ENCODE measurements at regions of chr15 and their contacts with region 1.

Region 1: GRCh38 chr15:83011271-83012075 is at the start of gene C15orf40:
- DNase-seq: peak; percentile 89
- H3K4me3 Mint-ChIP-seq: peak within 1 kb of the TSS; percentile 82
- H3K27ac Mint-ChIP-seq: peak within 1 kb of the TSS; percentile 82
- H3K4me1 Mint-ChIP-seq: peaks cover 24% of the 10 kb centered on the region
- H3K27me3 Mint-ChIP-seq: no peaks in the 10 kb centered on the region
- CTCF ChIP-seq: peak; percentile 37
- total RNA-seq, gene C15orf40: 38.1 and 39.3 TPM in 2 replicates

Region 2: GRCh38 chr15:82540055-82540983 is 471.2 kb before region 1 on chr15 and contains the start of gene RPS17:
- CTCF ChIA-PET with region 1: interaction called, 3 read pairs
- POLR2A ChIA-PET with region 1: interaction called, 11 read pairs
- intact Hi-C with region 1: no loop called
- DNase-seq: peak; percentile 95
- H3K4me3 Mint-ChIP-seq: peak within 1 kb of the TSS; percentile 92
- H3K27ac Mint-ChIP-seq: peak within 1 kb of the TSS; percentile 81
- H3K4me1 Mint-ChIP-seq: peaks cover 30% of the 10 kb centered on the region
- H3K27me3 Mint-ChIP-seq: no peaks in the 10 kb centered on the region
- CTCF ChIP-seq: peak; percentile 99
- total RNA-seq, gene RPS17: 2,707 and 3,065 TPM in 2 replicates

Region 3: DNA sequence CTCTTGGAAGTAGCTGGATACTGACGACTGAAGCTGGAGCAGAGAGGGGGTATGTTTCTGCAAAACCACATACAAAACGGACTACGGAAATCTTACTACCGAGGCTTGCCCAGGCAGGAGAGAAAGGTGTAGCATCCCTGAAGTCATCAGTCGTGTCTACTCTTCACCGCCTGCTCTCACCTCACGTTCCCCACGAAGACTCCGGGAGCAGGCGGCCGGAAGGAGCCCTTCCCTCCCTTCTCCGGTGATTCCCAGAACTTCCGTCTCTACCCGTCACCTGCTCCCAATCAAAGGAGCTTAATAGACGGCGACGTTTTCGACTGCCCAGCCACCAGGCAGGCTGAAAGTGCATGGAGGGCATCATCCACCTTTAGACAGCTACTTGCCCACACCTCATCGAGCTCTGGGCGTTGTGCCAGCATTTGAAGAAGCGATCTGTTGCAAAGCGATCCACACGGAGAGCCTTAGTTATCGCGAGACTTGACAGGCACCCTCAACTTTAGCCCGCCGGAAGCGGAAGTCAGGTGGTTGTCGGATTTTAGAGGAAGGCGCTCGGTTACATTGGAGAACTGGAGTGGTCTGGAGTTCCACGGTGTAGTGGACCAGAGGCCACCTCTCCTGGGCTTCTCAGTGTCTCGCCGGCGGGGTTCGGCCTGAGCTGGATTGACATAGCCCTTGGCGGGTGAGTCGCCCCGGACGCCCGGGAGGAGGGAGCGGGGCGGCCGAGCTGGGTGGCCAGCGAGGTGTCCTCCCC is 25.6 kb before region 1 on chr15 and contains the start of gene RAMAC:
- CTCF ChIA-PET with region 1: interaction called, 21 read pairs
- POLR2A ChIA-PET with region 1: interaction called, 26 read pairs
- intact Hi-C with region 1: no loop called
- DNase-seq: peak; percentile 96
- H3K4me3 Mint-ChIP-seq: peak within 1 kb of the TSS; percentile 98
- H3K27ac Mint-ChIP-seq: peak within 1 kb of the TSS; percentile 72
- H3K4me1 Mint-ChIP-seq: peaks cover 4% of the 10 kb centered on the region
- H3K27me3 Mint-ChIP-seq: no peaks in the 10 kb centered on the region
- CTCF ChIP-seq: no peak
- total RNA-seq, gene RAMAC: 21.0 and 25.6 TPM in 2 replicates

Region 4: DNA sequence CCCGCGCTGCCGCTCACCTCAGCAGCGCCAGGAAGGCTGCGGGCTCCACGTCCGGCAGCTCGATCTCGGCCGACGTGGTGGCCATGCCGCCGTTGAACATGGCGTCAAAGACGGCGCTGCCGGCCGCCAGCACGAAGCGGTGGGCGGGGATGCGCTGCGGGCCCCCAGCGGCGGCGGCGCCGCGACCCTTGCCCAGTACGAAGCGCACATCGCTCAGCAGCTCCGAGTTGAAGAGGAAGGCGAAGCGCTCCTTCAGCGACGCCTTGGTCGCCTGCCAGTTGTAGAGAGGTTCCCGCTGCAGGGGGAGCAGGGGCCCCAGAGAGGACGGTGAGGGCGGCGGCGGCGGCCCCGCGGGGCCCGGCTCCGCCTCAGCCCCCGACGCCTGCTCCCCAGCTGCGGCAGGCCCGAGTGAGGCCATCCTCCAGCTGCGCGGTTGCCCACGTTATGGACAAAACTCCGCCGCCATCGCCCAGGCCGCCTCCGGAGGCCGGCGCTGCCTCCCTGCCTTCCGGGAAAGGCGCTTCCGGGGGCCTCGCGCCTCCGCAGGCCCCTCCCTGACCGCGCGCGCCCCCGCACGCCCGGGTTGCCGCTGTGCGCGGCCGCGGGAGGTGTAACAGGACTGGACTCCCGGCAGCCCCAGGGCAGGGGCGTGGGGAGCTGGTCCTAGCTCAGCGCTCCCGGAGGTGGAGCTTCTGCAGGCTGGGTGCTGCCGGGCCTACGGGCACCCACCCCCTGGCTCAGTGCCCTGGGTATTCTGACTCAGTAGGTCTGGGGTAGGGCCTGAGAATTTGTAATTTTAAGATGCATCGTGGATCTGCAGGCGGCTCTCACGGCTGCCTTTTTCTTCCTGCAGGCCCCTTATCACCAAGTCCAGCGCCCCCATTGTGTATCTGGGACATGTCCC is 55.5 kb after region 1 on chr15 and contains the start of gene BTBD1:
- CTCF ChIA-PET with region 1: interaction called, 3 read pairs
- POLR2A ChIA-PET with region 1: interaction called, 12 read pairs
- intact Hi-C with region 1: loop called (anchors 5 kb)
- DNase-seq: peak; percentile 97
- H3K4me3 Mint-ChIP-seq: no peak within 1 kb of the TSS
- H3K27ac Mint-ChIP-seq: peak within 1 kb of the TSS; percentile 79
- H3K4me1 Mint-ChIP-seq: peaks cover 11% of the 10 kb centered on the region
- H3K27me3 Mint-ChIP-seq: no peaks in the 10 kb centered on the region
- CTCF ChIP-seq: no peak
- total RNA-seq, gene BTBD1: 42.7 and 57.0 TPM in 2 replicates

Region 5: GRCh38 chr15:83436458-83437158 is 425.1 kb after region 1 on chr15:
- CTCF ChIA-PET with region 1: interaction called, 3 read pairs
- POLR2A ChIA-PET with region 1: no interaction called
- intact Hi-C with region 1: loop called (anchors 1 kb)
- DNase-seq: peak; percentile 74
- H3K4me3 Mint-ChIP-seq: no peak overlapping the region
- H3K27ac Mint-ChIP-seq: no peak overlapping the region
- H3K4me1 Mint-ChIP-seq: peaks cover 20% of the 10 kb centered on the region
- H3K27me3 Mint-ChIP-seq: no peaks in the 10 kb centered on the region
- CTCF ChIP-seq: peak; percentile 59